Heart left ventricle (tissue), 16 donors: ENCODE measurements at regions of chr1 and their contacts with region 1.

Region 1: GRCh38 chr1:161749509-161750407 is at the start of gene DUSP12:
- DNase-seq: peak; percentile 95 to 97 (median 96)
- ATAC-seq: peak; percentile 99 to 100 (median 100)
- H3K4me3 ChIP-seq: peak within 1 kb of the TSS; percentile 60 to 96 (median 80)
- H3K27ac ChIP-seq: peak within 1 kb of the TSS; percentile 49 to 93 (median 88)
- H3K4me1 ChIP-seq: peaks cover 0 to 31% (median 11%) of the 10 kb centered on the region in 12 donors
- H3K27me3 ChIP-seq: peaks cover 0 to 4% (median 0%) of the 10 kb centered on the region in 9 donors
- CTCF ChIP-seq: peak in 5 of 12 donors; percentile 10 to 57 (median 29)
- POLR2A ChIP-seq: peak in 1 of 2 donors; percentile 65
- total RNA-seq, gene DUSP12: 5.2 to 10.0 (median 7.1) TPM

Region 2: GRCh38 chr1:161399257-161399998 is 350.3 kb before region 1 on chr1:
- intact Hi-C with region 1: loop called in 2 of 10 experiments (anchors 10 kb)
- DNase-seq: peak; percentile 87 to 92 (median 91)
- ATAC-seq: peak; percentile 85 to 93 (median 88)
- H3K4me3 ChIP-seq: peak overlapping the region; percentile 57 to 94 (median 80)
- H3K27ac ChIP-seq: peak overlapping the region; percentile 98 to 100 (median 100)
- H3K4me1 ChIP-seq: peaks cover 0 to 21% (median 8%) of the 10 kb centered on the region in 12 donors
- H3K27me3 ChIP-seq: no peaks in the 10 kb centered on the region
- CTCF ChIP-seq: peak in 11 of 12 donors; percentile 20 to 61 (median 43)
- POLR2A ChIP-seq: peak in 1 of 2 donors; percentile 15

Region 3: DNA sequence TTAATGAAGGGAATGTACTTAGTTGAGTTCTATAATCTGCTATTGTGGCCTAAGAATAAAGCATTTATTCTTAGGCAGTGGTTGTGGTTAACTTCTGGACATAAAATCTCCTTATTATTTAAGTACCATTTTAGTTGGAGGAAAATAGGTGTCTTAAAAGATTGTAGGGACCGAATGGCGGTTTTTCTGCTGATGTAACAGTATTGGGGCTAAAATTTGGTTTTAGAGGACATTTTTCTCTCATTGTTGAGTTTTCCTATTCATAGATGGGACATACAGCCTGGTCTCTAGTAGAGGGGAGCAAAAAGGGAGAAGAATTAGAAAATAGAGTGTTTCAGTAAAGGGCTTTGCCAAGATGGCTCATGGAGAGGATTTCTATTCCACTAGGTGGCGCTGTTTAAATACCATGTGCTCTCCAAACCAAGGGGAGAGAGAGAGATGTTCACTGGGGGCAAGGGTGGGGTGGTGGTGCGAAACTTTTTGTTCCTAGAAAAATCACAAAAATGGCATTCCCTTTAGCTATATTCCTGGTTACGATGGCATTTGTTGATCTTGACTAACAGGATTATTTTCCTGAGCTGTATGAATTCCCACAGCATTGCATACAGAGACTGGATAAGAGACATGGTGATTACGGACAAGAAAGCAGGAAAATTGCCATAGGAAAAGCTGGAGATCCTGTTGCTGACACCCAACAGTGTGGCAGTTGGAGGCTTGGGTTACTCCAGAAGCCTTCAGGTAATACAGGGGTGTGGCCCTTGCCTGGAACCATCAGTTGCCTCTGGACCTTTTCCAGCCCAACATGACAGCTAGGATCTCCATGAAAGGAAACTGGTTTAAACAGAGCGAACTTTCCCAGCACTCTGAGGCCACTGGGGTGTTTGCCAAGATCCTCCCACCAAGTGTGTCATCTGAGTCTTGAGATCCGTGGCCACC is 262.7 kb before region 1 on chr1:
- intact Hi-C with region 1: loop called in 7 of 10 experiments (anchors 10 kb)
- DNase-seq: peak in 4 of 5 donors; percentile 47 to 62 (median 48)
- ATAC-seq: peak in 3 of 4 donors; percentile 59 to 77 (median 60)
- H3K4me3 ChIP-seq: peak overlapping the region in 4 of 12 donors; percentile 6 to 26 (median 10)
- H3K27ac ChIP-seq: no peak overlapping the region
- H3K4me1 ChIP-seq: peaks cover 0 to 24% (median 0%) of the 10 kb centered on the region in 12 donors
- H3K27me3 ChIP-seq: peaks cover 0 to 61% (median 14%) of the 10 kb centered on the region in 9 donors
- CTCF ChIP-seq: peak; percentile 59 to 82 (median 72)
- POLR2A ChIP-seq: no peak

Region 4: GRCh38 chr1:161763522-161764098 is 13.9 kb after region 1 on chr1:
- intact Hi-C with region 1: loop called in 1 of 10 experiments (anchors 2 kb)
- DNase-seq: no peak
- ATAC-seq: no peak
- H3K4me3 ChIP-seq: no peak overlapping the region
- H3K27ac ChIP-seq: no peak overlapping the region
- H3K4me1 ChIP-seq: peaks cover 0 to 29% (median 16%) of the 10 kb centered on the region in 12 donors
- H3K27me3 ChIP-seq: no peaks in the 10 kb centered on the region
- CTCF ChIP-seq: peak in 11 of 12 donors; percentile 7 to 54 (median 28)
- POLR2A ChIP-seq: no peak

Region 5: GRCh38 chr1:162349635-162350330 is 600.0 kb after region 1 on chr1:
- intact Hi-C with region 1: no loop called
- DNase-seq: no peak
- ATAC-seq: peak in 1 of 4 donors; percentile 20
- H3K4me3 ChIP-seq: no peak overlapping the region
- H3K27ac ChIP-seq: no peak overlapping the region
- H3K4me1 ChIP-seq: peaks cover 0 to 12% (median 0%) of the 10 kb centered on the region in 12 donors
- H3K27me3 ChIP-seq: no peaks in the 10 kb centered on the region
- CTCF ChIP-seq: no peak
- POLR2A ChIP-seq: no peak